ENCODE measurements at regions of chr4 and their contacts with region 1.

Region 1: DNA sequence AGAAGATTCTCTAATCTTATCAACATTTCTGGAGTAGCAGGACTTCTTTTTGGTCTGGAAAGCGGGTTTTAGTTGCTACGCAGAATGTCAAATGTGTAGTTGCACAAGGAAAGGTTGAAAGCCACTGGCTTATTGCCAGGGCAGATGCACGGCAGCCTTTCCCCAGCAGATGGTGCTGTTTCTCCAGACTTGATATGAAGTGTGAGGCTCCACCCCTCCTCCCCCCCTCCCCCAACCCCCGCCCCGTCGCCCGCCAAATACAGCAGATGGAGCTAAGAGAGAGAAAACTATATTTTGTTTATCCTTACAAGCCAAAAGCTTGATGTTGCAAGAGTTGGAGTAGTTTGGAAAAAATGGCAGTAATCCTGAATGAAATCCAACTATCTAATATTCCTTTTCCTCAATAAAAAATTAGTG is 32.0 kb downstream of the ENOPH1 start:
- DNase-seq: peak; percentile 69 to 97 (median 90)

Region 2: GRCh38 chr4:82293304-82293703 is 169.1 kb before region 1 on chr4:
- intact Hi-C with region 1: no loop called
- DNase-seq: no peak

Region 3: DNA sequence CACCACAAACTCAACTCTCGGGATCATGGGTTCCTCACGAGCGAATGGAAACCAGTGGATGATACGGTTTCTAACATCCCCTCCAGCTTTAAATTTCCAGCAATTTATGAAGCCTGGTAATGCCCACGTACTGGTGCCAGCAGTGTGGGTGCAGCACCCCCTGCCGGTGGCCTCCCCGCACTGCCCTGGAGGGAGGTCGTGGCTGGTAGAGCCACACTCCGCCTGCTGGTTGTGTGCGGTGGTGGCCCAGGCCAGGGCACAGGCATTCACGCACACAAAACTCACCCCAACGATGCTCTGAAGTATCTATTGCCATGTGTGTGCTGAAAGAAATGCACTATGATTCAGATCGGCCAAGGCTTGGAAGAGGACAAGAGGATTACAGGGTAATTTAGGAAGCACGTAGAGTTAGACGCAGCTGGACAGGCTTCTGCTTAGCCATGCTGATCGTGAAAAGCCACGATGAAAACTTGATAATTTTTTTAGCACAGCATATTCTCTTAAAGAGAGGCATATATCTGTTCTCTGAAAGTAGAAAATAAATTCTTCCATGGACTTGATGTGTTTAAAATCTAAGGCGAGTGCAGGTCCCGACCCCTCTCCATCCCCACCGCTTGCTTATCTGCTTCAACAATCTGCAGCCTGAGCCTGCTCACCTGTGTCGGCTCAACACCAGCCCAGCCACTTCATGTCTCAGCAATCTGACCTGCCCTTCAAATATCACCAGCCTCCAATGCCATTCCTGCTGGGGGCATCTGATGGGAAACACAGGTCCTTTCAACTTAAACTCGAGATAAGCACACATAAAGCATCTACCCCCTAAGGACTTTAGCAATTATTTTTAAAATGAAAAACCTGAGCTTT is 277.1 kb after region 1 on chr4:
- intact Hi-C with region 1: loop called (anchors 5 kb)
- DNase-seq: peak in 41 of 42 donors; percentile 50 to 95 (median 80)

Region 4: GRCh38 chr4:82900331-82901128 is 438.1 kb after region 1 on chr4 and contains the start of gene THAP9:
- intact Hi-C with region 1: loop called (anchors 10 kb)
- DNase-seq: peak; percentile 96 to 100 (median 99)

Region 5: DNA sequence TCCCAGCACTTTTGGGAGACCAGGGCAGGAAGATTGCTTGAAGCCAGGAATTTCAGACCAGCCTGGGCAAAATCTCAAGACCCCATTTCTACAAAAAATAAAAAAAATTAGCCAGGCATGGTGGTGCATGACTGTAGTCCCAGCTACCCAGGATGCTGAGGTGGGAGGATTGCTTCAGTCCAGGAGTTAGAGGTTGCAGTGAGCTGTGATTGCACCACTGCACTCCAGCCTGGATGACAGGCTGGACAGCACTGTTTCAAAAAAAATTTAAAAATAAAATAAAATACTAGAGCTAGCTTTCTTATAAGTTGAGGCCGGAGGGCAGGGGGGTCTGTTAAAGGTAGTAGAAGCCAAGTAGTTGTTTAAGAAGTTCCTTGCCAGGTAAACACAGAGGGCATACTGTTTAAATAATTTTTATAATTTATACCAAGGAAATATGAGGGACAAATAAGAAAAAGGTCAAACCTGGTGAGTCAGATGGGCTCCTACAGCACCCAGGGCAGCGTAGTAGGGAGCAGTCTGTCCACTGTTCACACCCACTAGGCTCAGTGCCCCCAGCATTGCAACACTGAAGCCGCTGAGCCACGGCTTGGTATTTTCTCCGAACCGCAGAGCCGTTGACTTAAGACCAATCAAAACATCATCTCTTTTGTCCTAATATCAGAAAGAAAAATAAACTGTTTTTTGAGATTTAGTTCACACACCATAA is 804.9 kb after region 1 on chr4:
- intact Hi-C with region 1: loop called (anchors 10 kb)
- DNase-seq: no peak